GM12878 (cell line): ENCODE measurements at regions of chr12 and their contacts with region 1.

Region 1: DNA sequence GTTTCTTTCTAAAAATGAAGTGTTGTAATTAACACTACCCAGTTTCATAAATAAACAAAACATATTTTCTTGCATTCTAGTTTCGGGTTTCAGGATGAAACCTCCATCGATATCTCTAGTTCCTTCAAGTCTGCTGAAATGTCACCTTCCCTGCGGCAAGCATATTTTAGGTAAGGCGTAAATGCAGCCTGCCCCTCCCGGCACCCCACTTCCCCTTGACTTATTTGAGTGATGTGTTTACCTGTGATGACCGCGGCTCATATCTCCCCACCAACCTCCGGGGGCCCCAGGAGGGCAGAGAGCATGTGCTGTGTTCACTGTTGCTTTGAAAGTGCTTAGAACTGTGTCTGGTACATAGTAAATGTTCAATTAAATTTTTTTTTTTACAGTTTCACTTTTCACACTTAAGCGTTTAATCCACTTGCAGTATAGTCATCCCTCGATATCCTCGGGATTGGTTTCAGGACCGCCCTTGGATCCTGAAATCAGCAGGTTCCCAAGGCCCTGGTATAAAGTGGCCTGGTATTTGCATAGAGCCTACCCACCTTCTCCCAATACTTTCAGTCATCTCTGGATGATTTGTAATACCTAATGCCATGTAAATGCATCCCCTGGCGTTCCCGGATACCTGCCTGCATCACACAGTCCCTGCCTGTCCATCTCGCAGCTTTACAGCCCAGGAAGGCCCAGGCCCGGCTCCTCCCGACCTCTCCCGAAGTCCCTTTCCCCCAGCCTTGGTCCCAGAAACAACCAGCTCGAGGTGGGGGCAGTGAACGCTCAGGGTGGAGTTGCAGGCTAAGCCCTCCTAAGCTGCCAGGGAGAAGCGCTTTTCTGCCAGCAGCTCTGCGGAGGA is 40.2 kb upstream of the FBRSL1 start:
- DNase-seq: peak; percentile 77
- ATAC-seq: peak; percentile 87
- H3K4me3 ChIP-seq: peak overlapping the region; percentile 14; the same call in 1 of the 2 replicates
- H3K27ac ChIP-seq: peak overlapping the region; percentile 7; the same call in 1 of the 2 replicates
- H3K4me1 ChIP-seq: peaks cover 24% of the 10 kb centered on the region
- H3K27me3 ChIP-seq: no peaks in the 10 kb centered on the region
- CTCF ChIP-seq: no peak
- EP300 ChIP-seq: no peak; a peak in 1 of 4 replicates
- POLR2A ChIP-seq: no peak
- RAD21 ChIP-seq: no peak

Region 2: DNA sequence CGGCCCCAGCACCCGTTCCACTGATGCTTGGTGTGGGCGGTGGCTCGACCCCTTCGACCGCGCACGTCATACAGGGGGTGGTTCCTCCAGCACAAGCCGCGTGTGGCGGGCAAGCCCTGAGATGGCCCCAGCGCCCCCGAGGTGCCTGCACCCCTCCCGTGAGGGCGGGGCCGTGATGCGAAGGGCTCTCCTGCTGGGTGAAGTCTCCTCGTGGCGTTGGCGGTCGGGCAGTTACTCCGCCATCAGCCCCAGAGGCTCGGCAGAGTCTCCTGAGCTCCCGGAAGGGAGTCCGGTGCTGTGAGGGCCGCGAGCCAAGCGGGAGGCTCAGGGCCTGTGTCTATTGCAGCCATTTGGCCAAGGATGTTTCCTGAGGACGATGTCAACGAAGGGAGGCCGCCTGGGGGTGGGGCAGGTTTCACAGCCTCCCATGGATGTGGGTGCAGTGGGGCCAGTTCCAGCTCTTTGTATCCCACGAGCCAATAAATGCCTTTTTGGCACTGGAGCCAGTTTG is 42.3 kb before region 1 on chr12:
- CTCF ChIA-PET with region 1: no interaction called
- POLR2A ChIA-PET with region 1: no interaction called
- RAD21 ChIA-PET with region 1: no interaction called
- SMC1A ChIA-PET with region 1: no interaction called
- in situ Hi-C with region 1: no loop called
- intact Hi-C with region 1: no loop called
- DNase-seq: no peak
- ATAC-seq: no peak
- H3K4me3 ChIP-seq: no peak overlapping the region
- H3K27ac ChIP-seq: no peak overlapping the region
- H3K4me1 ChIP-seq: no peaks in the 10 kb centered on the region
- H3K27me3 ChIP-seq: no peaks in the 10 kb centered on the region
- CTCF ChIP-seq: no peak
- EP300 ChIP-seq: no peak
- POLR2A ChIP-seq: no peak
- RAD21 ChIP-seq: no peak

Region 3: GRCh38 chr12:132492522-132492921 is 42.7 kb after region 1 on chr12:
- CTCF ChIA-PET with region 1: no interaction called
- POLR2A ChIA-PET with region 1: no interaction called
- RAD21 ChIA-PET with region 1: no interaction called
- SMC1A ChIA-PET with region 1: interaction called, 6 read pairs
- in situ Hi-C with region 1: no loop called
- intact Hi-C with region 1: loop called (anchors 1 kb)
- DNase-seq: peak; percentile 39
- ATAC-seq: peak; percentile 76
- H3K4me3 ChIP-seq: peak overlapping the region; percentile 75
- H3K27ac ChIP-seq: peak overlapping the region; percentile 66
- H3K4me1 ChIP-seq: peaks cover 41% of the 10 kb centered on the region
- H3K27me3 ChIP-seq: no peaks in the 10 kb centered on the region
- CTCF ChIP-seq: peak in 1 of 3 experiments; percentile 16; a peak in 1 of 6 replicates
- EP300 ChIP-seq: peak in 1 of 2 experiments; percentile 36; a peak in 2 of 4 replicates
- POLR2A ChIP-seq: no peak; the same call in 1 of the 2 replicates
- RAD21 ChIP-seq: no peak